Dendritic cell treated with granulocyte-macrophage colony-stimulating factor and Interleukin-4, amounts not matched to agents 40 ng/mL and 50 ng/mL, for 4 days (primary cell): ENCODE measurements at regions of chr1 and their contacts with region 1.

Region 1: DNA sequence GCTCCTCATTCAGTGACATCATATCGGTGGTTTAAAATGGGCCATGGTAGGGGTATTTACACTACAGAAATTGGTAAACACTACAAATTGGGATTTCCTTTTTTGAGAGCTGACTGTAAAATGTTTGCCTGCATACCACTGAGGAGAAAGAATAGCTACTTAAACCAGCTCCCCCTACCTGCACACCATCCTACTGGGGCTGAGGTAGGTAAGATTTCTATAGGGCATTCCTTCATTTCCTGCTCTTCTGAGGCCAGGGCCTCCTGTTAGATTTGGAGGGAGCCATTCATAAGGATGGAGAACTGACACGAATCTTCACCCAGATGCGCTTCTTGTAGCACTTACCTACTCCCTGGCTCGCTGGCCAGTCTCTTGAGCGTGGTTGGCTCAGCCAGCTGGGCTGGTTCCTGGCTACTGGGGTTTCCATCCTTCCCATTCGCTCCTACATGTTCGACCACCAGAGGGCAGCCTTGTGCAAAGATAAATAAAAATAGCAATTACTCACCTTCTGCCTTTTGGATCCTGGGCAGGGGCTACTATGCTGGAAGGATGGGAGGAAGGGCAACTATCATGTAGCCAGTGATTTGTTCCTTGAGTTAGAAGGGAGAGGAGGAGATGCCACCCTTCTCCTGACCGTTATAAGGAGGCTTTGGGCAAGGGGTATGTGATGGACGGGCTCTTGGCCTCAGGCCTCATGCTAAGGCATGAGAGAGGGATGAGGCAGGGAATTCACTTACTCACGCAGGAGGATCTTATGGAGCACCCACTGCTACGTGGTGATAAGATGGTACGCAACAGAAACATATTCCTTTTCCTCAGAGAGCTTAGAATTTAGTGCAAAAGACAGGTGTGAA is 10.7 kb downstream of the OPTC start:
- H3K4me3 Mint-ChIP-seq: no peak overlapping the region
- H3K27ac Mint-ChIP-seq: no peak overlapping the region
- H3K4me1 Mint-ChIP-seq: peaks cover 8% of the 10 kb centered on the region
- H3K27me3 Mint-ChIP-seq: peaks cover 16% of the 10 kb centered on the region

Region 2: DNA sequence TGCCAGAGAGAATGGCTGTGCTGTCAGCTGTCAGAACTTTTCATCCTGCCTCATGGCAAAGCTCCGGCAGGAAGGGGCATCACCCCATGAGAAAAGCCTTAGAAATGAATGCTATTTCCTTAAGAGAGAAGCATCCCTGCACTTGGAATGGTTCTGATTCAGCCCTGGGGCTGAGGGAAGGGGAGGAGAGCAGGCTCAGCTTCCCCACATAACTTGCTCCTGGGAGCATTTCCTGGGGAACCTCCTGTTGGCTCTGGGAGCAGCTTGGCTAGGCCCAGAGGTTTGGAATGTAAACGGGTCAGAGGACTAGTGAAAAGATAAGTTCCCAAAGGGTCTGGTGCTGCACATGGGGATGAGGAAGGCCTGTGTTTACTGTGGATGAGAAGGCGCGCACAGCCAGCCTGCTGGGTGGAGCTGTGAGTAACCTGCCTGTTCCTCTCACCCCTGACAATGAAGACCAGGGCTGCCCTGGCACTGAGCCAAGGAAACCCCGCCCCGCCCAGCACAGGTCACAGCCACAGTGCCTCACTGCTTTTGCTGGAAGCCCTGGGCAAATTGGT is 24.0 kb before region 1 on chr1:
- intact Hi-C with region 1: no loop called
- H3K4me3 Mint-ChIP-seq: no peak overlapping the region
- H3K27ac Mint-ChIP-seq: no peak overlapping the region
- H3K4me1 Mint-ChIP-seq: peaks cover 20% of the 10 kb centered on the region
- H3K27me3 Mint-ChIP-seq: peaks cover 10% of the 10 kb centered on the region

Region 3: GRCh38 chr1:203638950-203639349 is 134.3 kb after region 1 on chr1:
- intact Hi-C with region 1: loop called (anchors 2 kb)
- H3K4me3 Mint-ChIP-seq: no peak overlapping the region
- H3K27ac Mint-ChIP-seq: no peak overlapping the region
- H3K4me1 Mint-ChIP-seq: peaks cover 30% of the 10 kb centered on the region
- H3K27me3 Mint-ChIP-seq: no peaks in the 10 kb centered on the region

Region 4: DNA sequence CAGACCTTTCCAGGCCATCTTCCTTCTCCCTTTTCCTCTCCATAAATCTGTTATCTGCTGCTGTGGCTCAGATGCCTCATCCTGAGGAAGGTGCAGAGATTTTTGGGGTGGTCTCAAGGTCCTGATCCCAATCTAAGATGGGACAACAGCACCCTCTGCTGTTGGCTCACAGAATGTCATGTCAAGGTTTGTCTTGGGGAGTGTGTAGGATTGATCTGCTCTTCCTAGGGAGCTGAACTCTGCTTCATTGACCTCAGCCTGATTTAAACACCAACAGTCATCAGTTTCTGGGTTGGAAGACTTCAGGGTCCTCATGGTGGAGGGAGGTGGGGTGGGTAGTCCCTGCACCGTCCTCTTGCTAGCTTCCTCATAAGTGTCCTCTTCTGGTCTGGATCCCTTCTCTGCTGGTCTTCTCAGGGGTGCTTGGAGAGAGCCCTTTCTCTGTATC is 197.5 kb after region 1 on chr1:
- intact Hi-C with region 1: loop called (anchors 1 kb)
- H3K4me3 Mint-ChIP-seq: no peak overlapping the region
- H3K27ac Mint-ChIP-seq: no peak overlapping the region
- H3K4me1 Mint-ChIP-seq: no peaks in the 10 kb centered on the region
- H3K27me3 Mint-ChIP-seq: no peaks in the 10 kb centered on the region

Region 5: GRCh38 chr1:203776636-203777035 is 272.0 kb after region 1 on chr1:
- intact Hi-C with region 1: loop called (anchors 2 kb)
- H3K4me3 Mint-ChIP-seq: no peak overlapping the region
- H3K27ac Mint-ChIP-seq: no peak overlapping the region
- H3K4me1 Mint-ChIP-seq: no peaks in the 10 kb centered on the region
- H3K27me3 Mint-ChIP-seq: no peaks in the 10 kb centered on the region